ENCODE measurements at regions of chr4 and their contacts with region 1.

Region 1: DNA sequence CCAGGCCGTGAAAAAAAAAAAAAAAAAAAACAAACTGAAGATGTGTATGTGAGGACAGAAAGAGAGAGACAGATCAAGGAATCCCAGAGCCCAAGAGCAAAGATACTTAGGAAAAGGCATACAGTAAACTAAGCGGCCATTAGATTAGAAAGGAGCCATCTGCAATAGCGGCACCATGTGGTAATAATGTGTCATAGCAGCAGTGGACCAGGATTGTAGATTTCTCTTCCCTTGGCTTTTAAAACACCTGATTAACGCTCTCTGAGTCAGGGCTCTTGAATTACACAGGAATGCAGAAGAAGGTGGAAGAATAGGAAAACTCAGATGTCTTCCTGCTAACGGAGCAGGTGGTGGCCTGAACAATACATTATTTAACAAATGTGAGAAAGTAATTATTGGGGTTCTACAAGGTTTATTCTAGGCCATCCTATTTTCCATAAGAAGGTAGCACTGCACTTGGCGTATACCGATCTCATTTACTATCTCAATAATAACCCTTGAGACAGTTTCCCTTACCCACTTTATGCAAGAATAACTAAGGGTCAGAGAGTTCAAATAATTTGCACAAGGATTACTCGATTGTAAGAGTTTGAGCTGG is 182.7 kb downstream of the KCNIP4 start:
- DNase-seq: peak in 1 of 5 donors; percentile 21
- H3K4me3 ChIP-seq: no peak overlapping the region
- H3K27ac ChIP-seq: no peak overlapping the region
- H3K4me1 ChIP-seq: peaks cover 1% of the 10 kb centered on the region
- H3K27me3 ChIP-seq: no peaks in the 10 kb centered on the region
- CTCF ChIP-seq: peak in 2 of 3 donors; percentile 35 to 52
- EP300 ChIP-seq: no peak
- POLR2A ChIP-seq: no peak

Region 2: DNA sequence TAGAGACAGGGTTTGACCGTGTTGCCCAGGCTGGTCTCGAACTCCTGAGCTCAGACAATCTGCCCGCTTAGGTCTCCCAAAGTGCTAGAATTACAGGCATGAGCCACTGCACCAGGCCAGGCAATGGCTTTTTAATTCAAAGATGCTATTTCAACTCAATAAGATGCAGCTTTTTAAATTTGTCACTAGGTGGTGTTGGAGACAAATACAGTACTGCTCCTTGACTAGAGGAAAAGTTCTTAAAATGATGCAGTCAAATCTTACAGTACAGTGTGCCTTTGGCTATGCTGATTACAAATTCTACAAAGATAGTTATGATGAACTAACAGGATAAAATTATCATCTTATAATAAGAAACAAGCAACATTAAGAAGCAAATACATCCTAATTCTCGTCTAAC is 258.5 kb before region 1 on chr4:
- intact Hi-C with region 1: loop called in 1 of 4 experiments (anchors 10 kb)
- DNase-seq: no peak
- H3K4me3 ChIP-seq: no peak overlapping the region
- H3K27ac ChIP-seq: no peak overlapping the region
- H3K4me1 ChIP-seq: no peaks in the 10 kb centered on the region
- H3K27me3 ChIP-seq: no peaks in the 10 kb centered on the region
- CTCF ChIP-seq: no peak
- EP300 ChIP-seq: no peak
- POLR2A ChIP-seq: no peak

Region 3: DNA sequence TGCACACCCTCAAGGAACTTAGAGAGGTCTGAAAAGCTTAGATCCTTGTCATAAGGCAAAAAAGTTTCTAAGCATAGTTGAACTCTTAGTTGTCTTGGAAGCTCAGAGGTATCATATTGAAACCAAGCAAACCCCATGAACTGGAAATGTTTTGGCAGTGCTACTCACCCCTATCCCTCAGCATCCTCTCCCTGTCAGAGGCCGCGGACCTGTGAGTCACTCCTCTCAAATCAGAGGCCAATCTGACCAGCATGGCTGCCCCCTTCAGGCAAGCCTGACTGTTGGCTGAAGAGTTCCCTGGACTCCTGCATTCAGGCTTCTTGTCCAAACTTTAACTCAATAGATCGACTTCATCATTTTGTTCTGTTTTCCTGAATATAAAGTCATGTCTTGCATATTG is 113.3 kb after region 1 on chr4:
- intact Hi-C with region 1: no loop called
- DNase-seq: no peak
- H3K4me3 ChIP-seq: no peak overlapping the region
- H3K27ac ChIP-seq: no peak overlapping the region
- H3K4me1 ChIP-seq: no peaks in the 10 kb centered on the region
- H3K27me3 ChIP-seq: no peaks in the 10 kb centered on the region
- CTCF ChIP-seq: no peak
- EP300 ChIP-seq: no peak
- POLR2A ChIP-seq: no peak

Measured in ovary (tissue), 10 donors.